ENCODE measurements at regions of chr1 and their contacts with region 1.

Region 1: GRCh38 chr1:234114648-234115307 is 210.3 kb downstream of the SLC35F3 start:
- DNase-seq: peak; percentile 78
- H3K4me3 ChIP-seq: peak overlapping the region; percentile 63
- H3K27ac ChIP-seq: no peak overlapping the region
- H3K4me1 ChIP-seq: no peaks in the 10 kb centered on the region
- H3K27me3 ChIP-seq: 0 out of 2 replicates have a peak, but pooled peaks cover 6% of the 10 kb centered on the region

Region 2: GRCh38 chr1:235105051-235106043 is 990.6 kb after region 1 on chr1:
- in situ Hi-C with region 1: loop called (anchors 25 kb)
- DNase-seq: peak; percentile 32
- H3K4me3 ChIP-seq: peak overlapping the region; percentile 58
- H3K27ac ChIP-seq: peak overlapping the region; percentile 9; the same call in 1 of the 2 replicates
- H3K4me1 ChIP-seq: peaks cover 11% of the 10 kb centered on the region; the same call in 1 of the 2 replicates
- H3K27me3 ChIP-seq: no peaks in the 10 kb centered on the region